B cell (primary cell): ENCODE measurements at regions of chr17 and their contacts with region 1.

Region 1: GRCh38 chr17:81238817-81239600 is at the starts of genes NDUFAF8 and TEPSIN:
- DNase-seq: peak; percentile 98
- ATAC-seq: peak; percentile 95
- H3K4me3 ChIP-seq: peak within 1 kb of the TSS; percentile 49 to 90 (median 82)
- H3K4me3 Mint-ChIP-seq: peak within 1 kb of the TSS; percentile 93
- H3K27ac ChIP-seq: peak within 1 kb of the TSS; percentile 18 to 82
- H3K27ac Mint-ChIP-seq: peak within 1 kb of the TSS; percentile 91
- H3K4me1 ChIP-seq: peaks cover 19 to 29% of the 10 kb centered on the region in 2 donors
- H3K4me1 Mint-ChIP-seq: peaks cover 44% of the 10 kb centered on the region
- H3K27me3 ChIP-seq: no peaks in the 10 kb centered on the region
- H3K27me3 Mint-ChIP-seq: no peaks in the 10 kb centered on the region
- CTCF ChIP-seq: no peak
- total RNA-seq, gene NDUFAF8: 39.4 and 42.6 TPM in 2 replicates
- total RNA-seq, gene TEPSIN: 177 and 180 TPM in 2 replicates

Region 2: GRCh38 chr17:80414803-80415625 is 824.0 kb before region 1 on chr17 and contains the start of gene ENDOV:
- CTCF ChIA-PET with region 1: no interaction called
- POLR2A ChIA-PET with region 1: interaction called, 5 read pairs
- intact Hi-C with region 1: loop called (anchors 1 kb)
- DNase-seq: peak; percentile 98
- ATAC-seq: peak; percentile 93
- H3K4me3 ChIP-seq: peak within 1 kb of the TSS; percentile 36 to 97 (median 82)
- H3K4me3 Mint-ChIP-seq: peak within 1 kb of the TSS; percentile 89
- H3K27ac ChIP-seq: peak within 1 kb of the TSS; percentile 60 to 81
- H3K27ac Mint-ChIP-seq: peak within 1 kb of the TSS; percentile 91
- H3K4me1 ChIP-seq: peaks cover 14 to 20% of the 10 kb centered on the region in 2 donors
- H3K4me1 Mint-ChIP-seq: peaks cover 24% of the 10 kb centered on the region
- H3K27me3 ChIP-seq: peaks cover 0 to 9% (median 2%) of the 10 kb centered on the region in 4 experiments
- H3K27me3 Mint-ChIP-seq: peaks cover 21% of the 10 kb centered on the region
- CTCF ChIP-seq: no peak
- total RNA-seq, gene ENDOV: 49.1 and 49.5 TPM in 2 replicates

Region 3: GRCh38 chr17:81025741-81026129 is 213.3 kb before region 1 on chr17:
- CTCF ChIA-PET with region 1: interaction called, 3 read pairs
- POLR2A ChIA-PET with region 1: no interaction called
- intact Hi-C with region 1: loop called (anchors 2 kb)
- DNase-seq: no peak
- ATAC-seq: no peak
- H3K4me3 ChIP-seq: no peak overlapping the region
- H3K4me3 Mint-ChIP-seq: no peak overlapping the region
- H3K27ac ChIP-seq: no peak overlapping the region
- H3K27ac Mint-ChIP-seq: no peak overlapping the region
- H3K4me1 ChIP-seq: peaks cover 0 to 7% of the 10 kb centered on the region in 2 donors
- H3K4me1 Mint-ChIP-seq: peaks cover 4% of the 10 kb centered on the region
- H3K27me3 ChIP-seq: peaks cover 0 to 20% (median 2%) of the 10 kb centered on the region in 4 experiments
- H3K27me3 Mint-ChIP-seq: peaks cover 21% of the 10 kb centered on the region
- CTCF ChIP-seq: no peak

Region 4: DNA sequence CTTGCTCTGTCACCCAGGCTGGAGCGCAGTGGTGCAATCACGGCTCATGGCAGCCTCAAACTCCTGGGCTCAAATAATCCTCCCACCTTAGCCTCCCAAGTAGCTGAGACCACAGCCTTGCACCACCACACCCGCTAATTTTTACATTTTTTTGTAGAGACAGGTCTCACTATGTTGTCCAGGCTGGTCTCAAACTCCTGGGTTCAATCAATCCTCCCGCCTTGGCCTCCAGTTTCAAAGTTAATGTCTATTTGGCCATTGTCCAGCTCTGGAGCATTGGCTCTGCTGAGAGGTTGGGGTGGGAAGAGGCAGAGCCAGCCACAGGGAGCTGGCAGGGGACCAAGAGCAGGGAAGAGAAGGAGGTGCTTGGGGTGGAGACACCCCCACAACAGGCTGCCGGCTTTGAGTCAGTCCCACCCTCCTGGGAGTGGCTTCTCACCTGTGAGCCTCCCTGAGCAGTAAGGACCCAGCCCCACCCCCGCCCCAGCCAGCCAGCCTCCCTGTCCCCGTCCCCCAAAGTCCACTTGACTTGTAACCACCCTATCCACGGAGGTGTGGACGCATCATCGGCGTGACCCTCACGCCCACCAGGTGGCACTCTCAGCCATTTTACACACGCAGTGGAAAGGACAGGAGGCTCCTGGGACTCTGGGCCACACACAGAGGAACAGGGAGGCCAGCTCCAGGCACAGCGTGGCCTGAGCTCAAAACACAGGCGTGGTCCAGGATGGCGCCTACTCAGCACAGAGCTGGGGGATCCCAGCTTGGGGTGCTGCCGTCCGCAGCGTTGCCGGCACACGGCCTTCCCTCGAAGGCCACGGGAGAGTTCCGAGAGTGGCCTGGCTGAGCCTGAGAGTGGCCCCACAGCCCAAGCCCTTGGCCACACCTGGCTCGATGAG is 96.5 kb before region 1 on chr17:
- CTCF ChIA-PET with region 1: interaction called, 43 read pairs
- POLR2A ChIA-PET with region 1: interaction called, 3 read pairs
- intact Hi-C with region 1: no loop called
- DNase-seq: peak; percentile 79
- ATAC-seq: peak; percentile 73
- H3K4me3 ChIP-seq: no peak overlapping the region
- H3K4me3 Mint-ChIP-seq: no peak overlapping the region
- H3K27ac ChIP-seq: no peak overlapping the region
- H3K27ac Mint-ChIP-seq: no peak overlapping the region
- H3K4me1 ChIP-seq: no peaks in the 10 kb centered on the region
- H3K4me1 Mint-ChIP-seq: peaks cover 2% of the 10 kb centered on the region
- H3K27me3 ChIP-seq: peaks cover 0 to 4% (median 0%) of the 10 kb centered on the region in 4 experiments
- H3K27me3 Mint-ChIP-seq: peaks cover 3% of the 10 kb centered on the region
- CTCF ChIP-seq: peak; percentile 73

Region 5: GRCh38 chr17:81165246-81166032 is 73.6 kb before region 1 on chr17 and contains the start of gene PVALEF:
- CTCF ChIA-PET with region 1: no interaction called
- POLR2A ChIA-PET with region 1: no interaction called
- intact Hi-C with region 1: no loop called
- DNase-seq: no peak
- ATAC-seq: no peak
- H3K4me3 ChIP-seq: peak within 1 kb of the TSS in 1 of 5 experiments; percentile 8
- H3K4me3 Mint-ChIP-seq: peak within 1 kb of the TSS; percentile 45
- H3K27ac ChIP-seq: no peak within 1 kb of the TSS
- H3K27ac Mint-ChIP-seq: no peak within 1 kb of the TSS
- H3K4me1 ChIP-seq: peaks cover 8 to 10% of the 10 kb centered on the region in 2 donors
- H3K4me1 Mint-ChIP-seq: peaks cover 4% of the 10 kb centered on the region
- H3K27me3 ChIP-seq: peaks cover 0 to 46% (median 14%) of the 10 kb centered on the region in 4 experiments
- H3K27me3 Mint-ChIP-seq: peaks cover 24% of the 10 kb centered on the region
- CTCF ChIP-seq: no peak
- total RNA-seq, gene PVALEF: not detected in 2 replicates

Region 6: GRCh38 chr17:81294856-81295680 is 56.1 kb after region 1 on chr17 and contains the start of gene SLC38A10:
- CTCF ChIA-PET with region 1: no interaction called
- POLR2A ChIA-PET with region 1: no interaction called
- intact Hi-C with region 1: loop called (anchors 1 kb)
- DNase-seq: peak; percentile 92
- ATAC-seq: peak; percentile 86
- H3K4me3 ChIP-seq: peak within 1 kb of the TSS; percentile 66 to 97 (median 91)
- H3K4me3 Mint-ChIP-seq: peak within 1 kb of the TSS; percentile 97
- H3K27ac ChIP-seq: peak within 1 kb of the TSS; percentile 75 to 94
- H3K27ac Mint-ChIP-seq: peak within 1 kb of the TSS; percentile 97
- H3K4me1 ChIP-seq: peaks cover 19 to 28% of the 10 kb centered on the region in 2 donors
- H3K4me1 Mint-ChIP-seq: peaks cover 43% of the 10 kb centered on the region
- H3K27me3 ChIP-seq: no peaks in the 10 kb centered on the region
- H3K27me3 Mint-ChIP-seq: no peaks in the 10 kb centered on the region
- CTCF ChIP-seq: no peak
- total RNA-seq, gene SLC38A10: 104 and 116 TPM in 2 replicates

Region 7: GRCh38 chr17:81666342-81667191 is 427.6 kb after region 1 on chr17 and contains the starts of genes CCDC137 and OXLD1:
- CTCF ChIA-PET with region 1: no interaction called
- POLR2A ChIA-PET with region 1: no interaction called
- intact Hi-C with region 1: loop called (anchors 1 kb)
- DNase-seq: peak; percentile 94
- ATAC-seq: peak; percentile 97
- H3K4me3 ChIP-seq: peak within 1 kb of the TSS; percentile 77 to 98 (median 93)
- H3K4me3 Mint-ChIP-seq: peak within 1 kb of the TSS; percentile 91
- H3K27ac ChIP-seq: peak within 1 kb of the TSS; percentile 69 to 80
- H3K27ac Mint-ChIP-seq: peak within 1 kb of the TSS; percentile 96
- H3K4me1 ChIP-seq: peaks cover 19 to 25% of the 10 kb centered on the region in 2 donors
- H3K4me1 Mint-ChIP-seq: peaks cover 23% of the 10 kb centered on the region
- H3K27me3 ChIP-seq: no peaks in the 10 kb centered on the region
- H3K27me3 Mint-ChIP-seq: no peaks in the 10 kb centered on the region
- CTCF ChIP-seq: no peak
- total RNA-seq, gene CCDC137: 36.0 and 41.7 TPM in 2 replicates
- total RNA-seq, gene OXLD1: 38.6 and 39.5 TPM in 2 replicates